ENCODE measurements at regions of chr21 and their contacts with region 1.

Region 1: DNA sequence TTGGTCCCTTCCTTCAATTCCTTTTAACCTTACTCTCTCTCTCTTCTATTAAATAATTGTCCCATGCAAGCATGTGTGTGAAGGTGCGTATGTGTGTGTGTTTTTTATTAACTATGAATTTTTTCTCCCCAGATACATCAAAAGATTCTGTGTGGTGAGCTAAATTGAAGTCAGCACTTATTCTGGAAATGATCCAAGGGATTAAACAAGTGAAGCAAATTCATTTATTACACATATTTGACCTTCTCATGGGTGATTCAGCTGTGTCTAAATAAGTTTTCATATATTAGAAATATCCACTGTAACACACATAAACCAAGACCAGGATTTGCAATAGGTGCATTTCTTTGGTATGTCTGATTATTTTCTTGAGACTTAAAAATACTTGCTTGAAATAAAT is 24.3 kb downstream of the CHODL start:
- DNase-seq: no peak
- ATAC-seq: no peak
- H3K4me3 ChIP-seq: no peak overlapping the region
- H3K4me3 Mint-ChIP-seq: no peak overlapping the region
- H3K27ac ChIP-seq: no peak overlapping the region
- H3K27ac Mint-ChIP-seq: no peak overlapping the region
- H3K4me1 ChIP-seq: no peaks in the 10 kb centered on the region
- H3K4me1 Mint-ChIP-seq: no peaks in the 10 kb centered on the region
- H3K27me3 ChIP-seq: no peaks in the 10 kb centered on the region
- H3K27me3 Mint-ChIP-seq: no peaks in the 10 kb centered on the region

Region 2: DNA sequence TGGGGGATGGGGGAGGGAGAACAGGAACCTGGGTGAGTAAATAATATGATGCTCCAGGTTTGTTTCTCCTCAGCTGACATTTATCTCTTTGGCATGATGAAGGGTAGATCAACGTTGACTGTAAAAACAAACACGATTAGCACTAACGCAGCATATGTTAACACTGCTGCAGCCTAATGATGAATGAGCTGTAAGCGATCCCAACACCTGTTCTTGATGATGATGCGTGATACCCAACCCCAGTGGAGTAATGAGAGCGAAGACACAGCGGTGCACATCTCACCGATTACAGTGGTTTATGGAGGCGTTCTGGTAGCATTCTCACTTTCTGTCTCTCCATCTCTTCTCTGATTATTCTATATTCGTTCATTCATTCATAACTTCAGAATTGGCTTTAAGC is 1898.7 kb before region 1 on chr21:
- CTCF ChIA-PET with region 1: no interaction called
- POLR2A ChIA-PET with region 1: interaction called in 1 of 2 experiments, 12 read pairs
- DNase-seq: no peak
- ATAC-seq: no peak
- H3K4me3 ChIP-seq: no peak overlapping the region
- H3K4me3 Mint-ChIP-seq: no peak overlapping the region
- H3K27ac ChIP-seq: no peak overlapping the region
- H3K27ac Mint-ChIP-seq: no peak overlapping the region
- H3K4me1 ChIP-seq: no peaks in the 10 kb centered on the region
- H3K4me1 Mint-ChIP-seq: no peaks in the 10 kb centered on the region
- H3K27me3 ChIP-seq: no peaks in the 10 kb centered on the region
- H3K27me3 Mint-ChIP-seq: no peaks in the 10 kb centered on the region

Region 3: DNA sequence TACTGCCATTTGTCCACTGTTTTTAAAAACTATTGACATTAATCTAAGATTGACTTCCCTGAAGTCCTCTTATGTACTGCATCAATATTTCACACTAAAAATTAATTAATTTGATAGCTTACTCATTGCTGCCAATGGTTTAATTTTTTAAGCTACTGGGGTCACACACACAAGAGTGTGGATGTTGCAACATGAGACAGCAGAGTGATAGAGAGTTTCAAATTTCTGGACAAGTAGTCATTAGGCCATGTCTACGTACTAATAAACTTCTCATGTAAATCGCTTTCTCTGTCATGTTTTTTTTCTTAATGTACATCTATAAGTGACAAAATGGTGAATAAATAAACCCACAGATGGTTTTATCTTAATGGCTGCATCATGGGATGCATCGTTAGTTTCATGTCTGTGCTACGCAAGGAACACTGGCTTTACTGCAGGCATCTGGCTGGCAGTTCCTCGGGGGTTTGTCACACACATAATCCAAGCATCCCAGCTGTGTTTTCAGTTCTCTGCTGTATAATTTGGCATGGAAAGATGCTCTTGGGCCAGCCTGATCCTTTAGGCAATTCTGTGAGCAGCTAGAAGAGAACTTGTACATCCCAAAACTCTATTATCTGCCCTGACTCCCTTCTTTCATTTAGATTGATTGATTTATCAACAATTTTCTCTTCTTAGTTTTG is 40.7 kb before region 1 on chr21:
- CTCF ChIA-PET with region 1: no interaction called
- POLR2A ChIA-PET with region 1: no interaction called
- DNase-seq: no peak
- ATAC-seq: no peak
- H3K4me3 ChIP-seq: no peak overlapping the region
- H3K4me3 Mint-ChIP-seq: no peak overlapping the region
- H3K27ac ChIP-seq: no peak overlapping the region
- H3K27ac Mint-ChIP-seq: no peak overlapping the region
- H3K4me1 ChIP-seq: no peaks in the 10 kb centered on the region
- H3K4me1 Mint-ChIP-seq: no peaks in the 10 kb centered on the region
- H3K27me3 ChIP-seq: no peaks in the 10 kb centered on the region
- H3K27me3 Mint-ChIP-seq: no peaks in the 10 kb centered on the region

Region 4: GRCh38 chr21:19343711-19344110 is 1074.8 kb after region 1 on chr21:
- CTCF ChIA-PET with region 1: no interaction called
- POLR2A ChIA-PET with region 1: no interaction called
- DNase-seq: no peak
- ATAC-seq: no peak
- H3K4me3 ChIP-seq: no peak overlapping the region
- H3K4me3 Mint-ChIP-seq: no peak overlapping the region
- H3K27ac ChIP-seq: no peak overlapping the region
- H3K27ac Mint-ChIP-seq: no peak overlapping the region
- H3K4me1 ChIP-seq: no peaks in the 10 kb centered on the region
- H3K4me1 Mint-ChIP-seq: no peaks in the 10 kb centered on the region
- H3K27me3 ChIP-seq: no peaks in the 10 kb centered on the region
- H3K27me3 Mint-ChIP-seq: no peaks in the 10 kb centered on the region